ENCODE measurements at regions of chr19 and their contacts with region 1.

Region 1: GRCh38 chr19:5031231-5032100 is 62.6 kb downstream of the KDM4B start:
- DNase-seq: peak; percentile 61 to 93 (median 84)
- ATAC-seq: peak; percentile 81 to 90 (median 90)
- H3K4me3 ChIP-seq: no peak overlapping the region
- H3K27ac ChIP-seq: no peak overlapping the region
- H3K4me1 ChIP-seq: no peaks in the 10 kb centered on the region
- H3K27me3 ChIP-seq: no peaks in the 10 kb centered on the region
- CTCF ChIP-seq: peak; percentile 88 to 91 (median 89)

Region 2: DNA sequence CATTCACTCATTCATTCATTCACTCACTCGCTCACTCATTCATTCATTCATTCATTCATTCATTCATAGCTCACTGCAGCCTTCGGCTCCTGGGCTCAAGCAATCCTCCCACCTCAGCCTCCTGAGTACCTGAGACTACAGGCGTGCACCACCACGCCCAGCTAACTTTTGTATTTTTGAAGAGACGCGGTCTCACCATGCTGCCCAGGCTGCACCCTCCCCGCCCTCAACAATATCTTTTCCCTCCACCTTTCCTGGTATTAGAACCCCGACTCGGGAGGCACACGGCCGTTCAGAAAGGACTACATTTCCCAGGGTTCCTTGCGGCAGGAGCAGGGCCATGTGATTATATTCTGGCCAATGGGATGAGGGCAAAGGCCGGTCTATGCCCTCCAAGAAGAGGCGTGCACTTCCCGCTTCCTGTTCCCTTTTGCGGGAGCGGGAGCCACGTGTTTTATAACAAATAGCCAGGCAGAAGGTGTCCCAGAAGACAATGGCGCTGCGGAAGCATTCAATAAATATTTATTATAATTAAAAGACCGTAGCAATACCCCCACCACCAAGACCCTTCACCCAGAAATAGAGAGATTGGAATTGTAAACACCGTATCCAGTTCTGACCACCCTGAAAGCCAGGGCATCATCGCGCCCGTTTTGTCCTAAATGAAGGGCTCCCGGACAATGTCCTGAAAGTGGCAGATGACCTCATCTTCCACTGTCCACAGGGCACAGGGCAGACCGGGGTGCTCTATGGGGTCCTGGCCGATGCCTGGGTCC is 215.9 kb before region 1 on chr19:
- intact Hi-C with region 1: loop called in 2 of 3 experiments (anchors 10 kb)
- DNase-seq: peak; percentile 80 to 92 (median 86)
- ATAC-seq: peak; percentile 89 to 96 (median 93)
- H3K4me3 ChIP-seq: peak overlapping the region in 2 of 4 donors; percentile 5 to 27
- H3K27ac ChIP-seq: no peak overlapping the region
- H3K4me1 ChIP-seq: peaks cover 0 to 9% (median 0%) of the 10 kb centered on the region in 3 donors
- H3K27me3 ChIP-seq: no peaks in the 10 kb centered on the region
- CTCF ChIP-seq: no peak

Region 3: DNA sequence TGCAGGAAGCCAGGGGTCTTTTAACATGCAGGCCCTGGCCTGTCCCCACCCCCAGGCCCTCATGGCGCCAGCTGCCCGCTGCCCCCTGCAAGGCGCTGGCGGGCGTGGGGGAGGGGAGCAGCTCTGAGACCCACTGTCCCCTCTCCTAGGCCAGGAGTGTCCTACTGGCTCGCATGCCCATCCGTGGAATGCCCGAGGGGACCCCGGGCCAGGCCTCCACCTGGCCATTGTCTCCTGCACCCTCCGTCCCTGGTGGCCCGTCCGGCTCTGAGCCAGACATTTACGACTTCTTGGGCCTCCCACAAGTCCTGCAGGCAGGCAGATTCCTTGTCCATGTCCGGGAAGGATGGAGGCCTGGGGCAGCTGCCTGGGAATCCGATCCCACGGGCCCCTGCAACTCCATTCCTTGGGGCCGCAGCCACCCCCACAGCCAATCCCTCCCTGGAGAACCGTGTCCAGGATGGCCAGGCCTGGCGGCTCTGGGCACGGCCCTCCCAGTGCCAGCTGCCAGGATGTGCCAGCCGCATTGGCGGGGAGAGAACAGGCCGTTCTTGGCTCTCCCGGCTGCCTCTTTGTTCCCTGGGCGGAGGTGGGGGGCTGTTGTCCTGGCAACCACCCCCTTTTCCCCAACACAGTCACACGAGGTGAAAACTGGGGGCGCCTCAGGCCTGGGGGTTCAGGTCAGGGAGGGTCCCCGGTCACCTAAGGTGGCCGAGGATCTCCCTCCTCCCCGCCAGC is 153.5 kb before region 1 on chr19:
- intact Hi-C with region 1: loop called in 2 of 3 experiments (anchors 5 kb)
- DNase-seq: peak in 2 of 6 donors; percentile 59 to 67
- ATAC-seq: peak; percentile 22 to 71 (median 63)
- H3K4me3 ChIP-seq: no peak overlapping the region
- H3K27ac ChIP-seq: peak overlapping the region; percentile 17 to 35 (median 26)
- H3K4me1 ChIP-seq: no peaks in the 10 kb centered on the region
- H3K27me3 ChIP-seq: no peaks in the 10 kb centered on the region
- CTCF ChIP-seq: no peak

Region 4: DNA sequence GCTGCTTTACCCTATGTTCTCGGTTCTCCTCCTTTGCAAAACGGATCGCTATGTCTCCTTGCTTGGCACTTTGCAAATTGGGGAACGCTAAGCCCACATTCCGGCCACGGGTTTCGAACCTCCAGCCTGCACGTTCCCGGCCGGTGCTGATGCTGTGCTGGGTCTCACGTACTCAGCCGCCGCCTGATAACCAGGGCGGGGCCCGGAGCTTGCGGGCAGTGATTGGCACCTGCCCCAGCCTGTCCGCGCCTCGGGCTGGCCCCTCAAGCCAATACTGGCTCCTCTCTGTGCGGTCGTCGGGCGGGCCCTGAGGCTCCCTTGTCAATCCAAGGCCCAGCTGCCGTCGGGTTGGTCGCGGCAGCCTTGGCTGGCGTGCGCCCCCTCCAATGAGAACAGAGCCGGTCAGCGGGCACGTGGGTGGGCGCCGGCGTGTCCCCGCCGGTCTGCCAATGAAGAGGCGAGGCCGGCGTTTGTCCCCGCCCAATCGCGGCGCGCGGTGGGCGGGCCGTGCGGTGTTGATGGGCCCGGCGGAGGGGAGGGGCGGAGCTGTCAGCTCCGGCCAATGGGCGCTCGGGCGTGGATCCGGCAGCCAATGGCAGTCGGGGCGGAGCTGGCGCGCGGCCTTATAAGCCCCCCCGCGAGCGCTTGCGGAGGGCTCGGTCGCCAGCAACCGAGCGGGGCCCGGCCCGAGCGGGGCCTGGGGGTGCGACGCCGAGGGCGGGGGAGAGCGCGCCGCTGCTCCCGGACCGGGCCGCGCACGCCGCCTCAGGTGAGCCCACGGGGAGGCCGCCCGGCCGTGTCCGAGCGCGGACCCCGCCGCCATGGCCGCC is 62.8 kb before region 1 on chr19 and contains the start of gene KDM4B:
- intact Hi-C with region 1: no loop called
- DNase-seq: peak; percentile 99 to 100 (median 100)
- ATAC-seq: peak; percentile 91 to 96 (median 93)
- H3K4me3 ChIP-seq: peak within 1 kb of the TSS; percentile 33 to 65 (median 55)
- H3K27ac ChIP-seq: peak within 1 kb of the TSS in 3 of 4 donors; percentile 1 to 76 (median 63)
- H3K4me1 ChIP-seq: peaks cover 0 to 23% (median 3%) of the 10 kb centered on the region in 3 donors
- H3K27me3 ChIP-seq: no peaks in the 10 kb centered on the region
- CTCF ChIP-seq: no peak
- total RNA-seq, gene KDM4B: 13.8 to 22.7 (median 18.5) TPM

Region 5: GRCh38 chr19:5225486-5226345 is 194.2 kb after region 1 on chr19:
- intact Hi-C with region 1: no loop called
- DNase-seq: peak in 2 of 6 donors; percentile 66 to 74
- ATAC-seq: peak in 2 of 4 donors; percentile 37 to 58
- H3K4me3 ChIP-seq: no peak overlapping the region
- H3K27ac ChIP-seq: no peak overlapping the region
- H3K4me1 ChIP-seq: no peaks in the 10 kb centered on the region
- H3K27me3 ChIP-seq: no peaks in the 10 kb centered on the region
- CTCF ChIP-seq: peak in 3 of 4 donors; percentile 14 to 22 (median 16)

Region 6: DNA sequence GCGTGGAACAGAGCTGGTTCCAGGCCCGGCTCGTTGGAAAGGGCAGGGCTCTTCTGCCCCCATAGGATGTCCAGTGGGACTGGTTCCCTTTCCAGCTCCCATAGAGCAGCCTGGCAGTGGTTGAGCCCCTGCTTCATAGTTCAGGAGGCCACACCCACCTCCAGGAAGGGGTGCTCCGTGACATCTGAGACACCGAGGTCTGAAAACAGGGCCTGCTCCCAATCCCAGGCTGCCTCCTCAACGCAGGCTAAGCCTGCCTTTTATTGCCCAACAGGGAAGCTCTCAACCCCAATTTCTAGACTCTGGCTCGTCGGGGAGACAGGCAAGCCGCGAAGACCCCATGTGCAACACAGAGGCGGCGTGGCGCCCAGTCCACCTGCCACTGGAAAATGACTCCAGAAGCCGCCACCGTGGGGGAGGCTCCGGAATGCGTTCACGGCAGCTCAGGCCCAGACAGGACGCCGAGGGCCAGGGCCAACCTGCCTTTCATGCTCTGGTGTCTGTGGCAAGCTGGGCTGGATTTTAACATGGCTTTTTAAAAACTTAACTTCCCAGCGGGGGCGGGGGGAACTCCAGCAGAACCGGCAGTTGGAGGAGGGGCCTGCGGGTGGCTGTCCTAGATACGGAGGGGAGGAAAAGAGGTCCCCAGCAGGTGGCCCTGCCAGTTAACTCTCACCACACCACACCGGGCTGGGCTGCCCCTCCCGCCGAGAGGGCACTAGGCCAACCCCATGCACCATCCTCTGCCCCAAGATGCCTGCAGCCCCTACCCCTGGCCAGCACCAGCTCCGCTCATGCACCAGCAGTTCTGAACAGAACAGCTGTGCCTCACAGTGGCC is 554.2 kb after region 1 on chr19:
- intact Hi-C with region 1: loop called in 2 of 3 experiments (anchors 10 kb)
- DNase-seq: peak in 3 of 6 donors; percentile 29 to 68 (median 32)
- ATAC-seq: peak; percentile 15 to 47 (median 30)
- H3K4me3 ChIP-seq: no peak overlapping the region
- H3K27ac ChIP-seq: peak overlapping the region in 3 of 4 donors; percentile 19 to 39 (median 28)
- H3K4me1 ChIP-seq: no peaks in the 10 kb centered on the region
- H3K27me3 ChIP-seq: no peaks in the 10 kb centered on the region
- CTCF ChIP-seq: no peak